HEK293T (cell line): ENCODE measurements at regions of chr6 and their contacts with region 1.

Region 1: GRCh38 chr6:26568601-26569432 is 27.9 kb upstream of the ABT1 start:
- DNase-seq: peak; percentile 80

Region 2: DNA sequence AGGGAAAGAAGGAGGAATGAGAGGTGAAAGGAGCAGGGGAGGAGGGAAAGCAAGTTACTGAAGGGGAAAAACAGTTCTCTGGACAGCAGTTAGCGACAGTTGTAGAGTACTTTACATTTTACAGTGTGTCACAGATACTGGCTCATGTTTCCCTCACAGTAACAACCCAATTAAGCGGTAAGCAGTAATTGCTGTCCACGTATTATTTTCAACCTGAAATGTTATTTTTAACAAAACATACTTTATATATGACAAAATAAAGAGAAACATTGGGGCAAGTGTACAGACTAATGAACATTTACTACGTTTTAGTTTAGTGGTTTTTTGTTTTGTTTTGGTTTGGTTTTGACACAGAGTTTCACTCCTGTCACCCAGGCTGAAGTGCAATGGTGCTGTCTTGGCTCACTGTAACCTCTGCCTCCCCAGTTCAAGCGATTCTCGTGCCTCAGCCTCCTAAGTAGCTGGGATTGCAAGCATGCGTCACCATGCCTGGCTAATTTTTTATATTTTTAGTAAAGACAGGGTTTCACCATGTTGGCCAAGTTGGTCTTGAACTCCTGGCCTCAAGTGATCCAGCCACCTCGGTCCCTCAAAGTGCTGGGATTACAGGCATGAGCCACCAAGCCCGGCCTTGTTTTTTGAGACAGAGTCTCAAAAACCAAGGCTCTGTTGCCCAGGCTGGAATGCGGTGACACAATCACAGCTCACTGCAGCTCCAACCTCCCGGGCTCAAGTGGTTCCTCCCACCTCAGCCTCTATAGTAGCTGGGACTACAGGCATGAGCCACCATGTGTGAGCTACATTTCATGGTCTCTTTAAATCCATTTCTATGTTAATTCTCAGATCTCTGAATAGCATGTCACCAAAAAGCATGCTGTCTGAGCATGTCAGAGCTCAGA is 226.5 kb before region 1 on chr6:
- CTCF ChIA-PET with region 1: interaction called, 5 read pairs
- POLR2A ChIA-PET with region 1: interaction called, 10 read pairs
- DNase-seq: no peak